Ovary (tissue), 10 donors: ENCODE measurements at regions of chr12 and their contacts with region 1.

Region 1: GRCh38 chr12:124567661-124568373 is 405 bp upstream of the NCOR2 start:
- DNase-seq: peak; percentile 95 to 98 (median 97)
- H3K4me3 ChIP-seq: peak overlapping the region; percentile 36
- H3K27ac ChIP-seq: peak overlapping the region; percentile 73 to 83
- H3K4me1 ChIP-seq: peaks cover 22% of the 10 kb centered on the region
- H3K27me3 ChIP-seq: no peaks in the 10 kb centered on the region
- CTCF ChIP-seq: peak in 1 of 3 donors; percentile 12
- EP300 ChIP-seq: no peak
- POLR2A ChIP-seq: no peak

Region 2: GRCh38 chr12:124379938-124380754 is 187.7 kb before region 1 on chr12:
- intact Hi-C with region 1: loop called in 3 of 4 experiments (anchors 5 to 10 kb)
- DNase-seq: peak; percentile 77 to 88 (median 85)
- H3K4me3 ChIP-seq: no peak overlapping the region
- H3K27ac ChIP-seq: peak overlapping the region; percentile 47 to 93
- H3K4me1 ChIP-seq: peaks cover 18% of the 10 kb centered on the region
- H3K27me3 ChIP-seq: no peaks in the 10 kb centered on the region
- CTCF ChIP-seq: peak; percentile 57 to 90 (median 81)
- EP300 ChIP-seq: no peak
- POLR2A ChIP-seq: no peak

Region 3: DNA sequence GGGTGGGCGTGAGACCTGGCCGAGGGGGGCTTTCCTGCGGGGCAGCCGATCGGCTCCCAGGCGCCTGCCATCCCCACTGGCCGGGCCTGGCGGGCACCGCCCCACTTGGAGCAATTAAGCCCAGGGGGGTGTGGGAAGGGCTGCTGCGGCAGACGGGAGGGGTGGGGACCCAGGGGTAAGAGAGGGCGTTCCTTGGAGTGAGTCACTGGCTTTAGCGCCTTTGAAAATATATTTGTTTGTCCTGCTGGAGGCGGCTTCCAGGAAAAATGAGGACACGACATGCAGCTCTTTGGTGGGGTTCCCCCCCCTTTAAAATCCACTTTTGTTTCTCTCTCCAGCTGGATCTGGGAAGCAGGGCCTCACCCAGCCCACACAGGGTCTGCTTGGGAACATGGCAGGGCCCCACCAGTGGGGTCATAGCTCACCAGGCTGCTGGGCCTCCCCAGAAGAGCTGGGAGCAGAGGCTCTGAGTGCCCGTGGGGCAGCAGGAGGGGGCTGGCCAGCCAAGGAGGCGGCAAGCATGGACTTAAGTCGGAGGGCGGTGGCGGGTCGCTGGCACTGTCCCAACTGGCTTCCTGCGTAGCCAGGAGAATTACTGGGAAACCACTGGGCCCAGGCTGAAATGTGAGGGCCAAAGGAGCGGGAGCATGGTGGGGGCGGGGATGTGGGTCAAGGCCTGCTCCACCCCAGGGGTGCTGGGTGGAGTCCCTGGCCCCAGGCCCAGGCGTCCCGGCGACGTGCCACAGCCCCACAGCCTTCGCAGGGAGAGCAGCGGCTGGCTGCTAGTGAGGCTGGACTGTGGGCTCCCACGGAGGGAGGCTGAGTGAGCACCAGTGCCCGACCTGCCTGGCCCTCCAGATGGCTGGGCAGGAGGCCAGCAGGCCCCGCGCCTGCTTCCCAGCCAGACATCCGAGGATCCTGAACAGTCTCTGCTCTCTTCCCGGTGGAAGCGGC is 145.0 kb before region 1 on chr12:
- intact Hi-C with region 1: loop called in 1 of 4 experiments (anchors 10 kb)
- DNase-seq: peak; percentile 95 to 98 (median 97)
- H3K4me3 ChIP-seq: peak overlapping the region; percentile 31
- H3K27ac ChIP-seq: peak overlapping the region; percentile 58 to 86
- H3K4me1 ChIP-seq: peaks cover 19% of the 10 kb centered on the region
- H3K27me3 ChIP-seq: no peaks in the 10 kb centered on the region
- CTCF ChIP-seq: peak in 2 of 3 donors; percentile 6 to 31
- EP300 ChIP-seq: peak; percentile 86
- POLR2A ChIP-seq: no peak

Region 4: GRCh38 chr12:124518051-124518932 is 49.5 kb before region 1 on chr12:
- intact Hi-C with region 1: loop called in 2 of 4 experiments (anchors 2 to 10 kb)
- DNase-seq: peak; percentile 99 to 100 (median 100)
- H3K4me3 ChIP-seq: peak overlapping the region; percentile 34
- H3K27ac ChIP-seq: peak overlapping the region; percentile 78 to 99
- H3K4me1 ChIP-seq: peaks cover 38% of the 10 kb centered on the region
- H3K27me3 ChIP-seq: no peaks in the 10 kb centered on the region
- CTCF ChIP-seq: no peak
- EP300 ChIP-seq: no peak
- POLR2A ChIP-seq: peak; percentile 39

Region 5: DNA sequence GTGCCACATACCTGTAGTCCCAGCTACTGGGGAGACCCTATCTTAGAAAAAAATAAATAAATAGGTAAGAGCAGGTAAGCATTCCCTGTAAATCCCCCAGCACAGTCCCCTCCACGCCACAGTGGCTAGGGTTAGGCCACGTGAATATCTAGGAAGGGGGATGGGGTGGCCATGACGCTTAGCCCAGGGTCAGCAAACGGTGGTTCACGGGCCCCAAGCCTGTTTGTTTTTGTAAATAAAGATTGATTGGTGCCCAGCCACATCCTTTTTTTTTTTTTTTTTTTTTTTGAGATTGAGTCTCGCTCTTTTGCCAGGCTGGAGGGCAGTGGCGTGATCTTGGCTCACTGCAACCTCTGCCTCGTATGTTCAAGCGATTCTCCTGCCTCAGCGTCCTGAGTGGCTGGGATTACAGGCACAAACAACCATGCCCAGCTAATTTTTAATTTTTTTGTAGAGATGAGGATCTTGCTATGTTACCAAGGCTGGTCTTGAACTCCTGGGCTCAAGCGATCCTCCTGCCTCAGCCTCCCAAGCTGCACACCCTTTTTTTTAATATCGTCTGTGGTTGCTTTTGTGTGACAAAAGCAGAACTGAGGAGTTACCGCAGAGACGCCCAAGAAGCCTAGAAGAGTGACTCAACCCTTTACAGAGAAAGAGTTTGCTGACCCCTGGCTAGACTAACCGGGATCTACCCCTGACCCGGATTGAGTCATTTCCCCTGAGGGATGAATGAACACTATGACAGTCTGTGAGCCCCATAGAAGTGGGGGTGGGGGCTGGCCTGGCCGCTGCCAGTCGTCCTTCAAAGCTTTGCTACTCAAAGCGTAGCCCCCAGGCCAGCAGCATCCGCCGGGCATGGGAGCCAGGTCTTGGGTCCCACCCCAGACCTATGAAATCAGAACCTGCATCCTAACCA is 113.3 kb after region 1 on chr12:
- intact Hi-C with region 1: loop called in 2 of 4 experiments (anchors 10 kb)
- DNase-seq: peak in 2 of 5 donors; percentile 30 to 33
- H3K4me3 ChIP-seq: no peak overlapping the region
- H3K27ac ChIP-seq: no peak overlapping the region
- H3K4me1 ChIP-seq: peaks cover 16% of the 10 kb centered on the region
- H3K27me3 ChIP-seq: no peaks in the 10 kb centered on the region
- CTCF ChIP-seq: no peak
- EP300 ChIP-seq: no peak
- POLR2A ChIP-seq: no peak

Region 6: DNA sequence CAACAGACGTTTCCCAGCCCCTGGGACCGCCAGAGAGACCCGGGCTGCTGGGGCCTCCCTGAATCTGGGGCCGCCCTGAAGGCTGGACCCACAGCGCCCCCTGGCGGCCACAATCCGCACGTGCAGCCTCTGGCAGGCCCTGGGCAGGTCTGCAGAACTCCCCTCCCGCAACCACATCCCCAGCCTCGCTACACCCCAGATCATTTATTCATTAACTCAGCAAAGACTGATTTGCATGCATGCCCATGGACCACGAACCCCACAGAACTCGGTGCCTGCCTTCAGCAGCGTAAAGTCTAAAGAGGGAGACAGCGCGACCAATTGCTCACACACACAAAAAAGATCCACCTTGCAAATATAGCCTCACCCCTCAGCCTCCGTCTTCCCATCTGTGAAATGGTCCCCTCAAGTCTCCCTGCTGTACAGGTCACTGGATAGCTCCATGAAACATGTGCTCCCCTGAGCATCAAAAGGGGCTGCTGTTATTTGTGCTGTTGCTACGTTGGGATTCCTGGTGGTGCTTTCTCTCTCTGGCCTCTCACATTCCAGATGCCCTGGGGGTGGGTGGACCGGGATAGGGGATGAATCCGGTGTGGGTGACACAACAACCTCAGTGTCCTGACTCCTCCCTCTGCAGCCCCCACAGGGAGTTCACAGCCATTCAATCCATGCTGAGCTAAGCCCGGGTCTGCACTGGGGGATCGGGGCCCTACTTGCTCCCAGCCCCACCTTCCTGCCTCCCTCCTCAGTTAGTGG is 199.4 kb after region 1 on chr12:
- intact Hi-C with region 1: loop called in 3 of 4 experiments (anchors 2 to 10 kb)
- DNase-seq: peak; percentile 74 to 90 (median 86)
- H3K4me3 ChIP-seq: no peak overlapping the region
- H3K27ac ChIP-seq: peak overlapping the region in 1 of 2 donors; percentile 58
- H3K4me1 ChIP-seq: peaks cover 12% of the 10 kb centered on the region
- H3K27me3 ChIP-seq: no peaks in the 10 kb centered on the region
- CTCF ChIP-seq: peak; percentile 96 to 98 (median 98)
- EP300 ChIP-seq: no peak
- POLR2A ChIP-seq: no peak

Region 7: DNA sequence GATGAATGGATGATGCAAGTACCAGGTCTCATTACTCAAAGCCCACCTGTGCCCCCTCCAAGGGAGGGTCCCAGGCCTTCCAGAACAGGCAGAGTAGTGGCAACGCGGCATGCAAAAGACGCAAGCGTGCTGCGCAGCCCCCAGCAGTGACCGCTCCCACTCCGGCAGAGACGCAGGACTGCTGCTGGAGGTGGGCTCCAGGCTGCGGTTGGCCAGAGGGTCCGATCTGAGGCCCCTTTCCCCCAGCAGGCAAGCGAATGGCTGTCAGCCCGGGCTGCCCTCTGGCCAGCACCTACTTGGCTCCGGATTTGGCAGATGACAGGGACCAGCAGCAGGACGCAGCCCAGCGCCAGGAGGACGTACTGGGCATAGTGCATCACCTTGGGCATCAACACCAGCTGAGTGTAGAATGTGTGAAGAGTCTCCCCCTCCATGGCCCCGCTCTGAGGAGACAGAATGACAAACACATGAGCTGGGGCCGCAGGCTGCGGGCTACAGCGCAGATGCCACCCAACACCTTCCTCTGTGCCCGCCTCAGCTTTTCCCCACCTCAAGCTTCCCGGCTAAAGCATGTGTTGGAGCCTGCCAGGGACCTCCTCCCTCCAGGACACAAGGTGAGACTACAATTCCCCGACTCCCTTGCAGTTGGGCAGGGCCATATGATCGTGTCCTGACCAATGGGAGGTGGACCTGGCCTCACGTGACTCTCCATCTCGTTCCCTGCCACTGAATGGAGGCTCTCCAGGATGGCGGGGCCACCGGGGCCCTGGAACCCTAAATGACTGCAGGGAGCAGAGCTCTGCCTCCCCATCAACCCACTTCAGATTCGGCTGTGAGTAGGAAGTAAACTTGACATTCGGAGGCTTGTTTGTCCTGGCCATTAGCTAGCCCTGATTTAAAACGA is 218.5 kb after region 1 on chr12:
- intact Hi-C with region 1: no loop called
- DNase-seq: peak in 1 of 5 donors; percentile 65
- H3K4me3 ChIP-seq: peak overlapping the region; percentile 20
- H3K27ac ChIP-seq: no peak overlapping the region
- H3K4me1 ChIP-seq: no peaks in the 10 kb centered on the region
- H3K27me3 ChIP-seq: no peaks in the 10 kb centered on the region
- CTCF ChIP-seq: no peak
- EP300 ChIP-seq: no peak
- POLR2A ChIP-seq: no peak